ENCODE measurements at regions of chr10 and their contacts with region 1.

Region 1: DNA sequence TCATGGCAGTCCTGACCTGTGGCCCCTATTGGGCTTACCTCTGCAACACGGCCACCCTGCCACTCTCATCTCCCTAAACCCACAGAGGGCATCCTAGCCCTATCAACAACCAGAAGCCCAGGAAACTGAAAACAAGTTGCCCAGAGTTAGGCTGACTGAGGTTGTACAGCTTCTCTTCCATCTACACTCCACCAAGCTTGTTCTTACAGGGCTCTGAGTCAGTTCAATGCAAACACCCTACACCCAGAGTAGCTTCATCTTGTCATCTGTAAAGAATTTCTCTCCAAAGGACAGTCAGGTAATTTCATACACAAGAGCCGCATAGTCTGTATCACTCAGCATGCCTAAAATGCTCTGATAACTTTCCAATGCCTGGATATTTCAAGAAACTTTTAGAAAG is 175.4 kb downstream of the ARID5B start:
- DNase-seq: peak; percentile 59 to 98
- H3K4me3 ChIP-seq: peak overlapping the region; percentile 15; the same call in 1 of the 2 replicates
- H3K27ac ChIP-seq: peak overlapping the region; percentile 65
- H3K4me1 ChIP-seq: peaks cover 41% of the 10 kb centered on the region
- H3K27me3 ChIP-seq: no peaks in the 10 kb centered on the region
- CTCF ChIP-seq: no peak; the same call in 1 of the 2 replicates

Region 2: GRCh38 chr10:61628875-61629513 is 447.9 kb before region 1 on chr10:
- CTCF ChIA-PET with region 1: no interaction called
- POLR2A ChIA-PET with region 1: interaction called, 15 read pairs
- intact Hi-C with region 1: no loop called
- DNase-seq: peak; percentile 27 to 92
- H3K4me3 ChIP-seq: no peak overlapping the region
- H3K27ac ChIP-seq: 0 out of 2 replicates have a peak overlapping the region, but pooled peaks have one; percentile 35
- H3K4me1 ChIP-seq: peaks cover 42% of the 10 kb centered on the region
- H3K27me3 ChIP-seq: no peaks in the 10 kb centered on the region
- CTCF ChIP-seq: no peak

Region 3: GRCh38 chr10:61822781-61823230 is 254.1 kb before region 1 on chr10:
- CTCF ChIA-PET with region 1: no interaction called
- POLR2A ChIA-PET with region 1: no interaction called
- intact Hi-C with region 1: no loop called
- DNase-seq: no peak
- H3K4me3 ChIP-seq: no peak overlapping the region
- H3K27ac ChIP-seq: no peak overlapping the region
- H3K4me1 ChIP-seq: peaks cover 9% of the 10 kb centered on the region; the same call in 1 of the 2 replicates
- H3K27me3 ChIP-seq: no peaks in the 10 kb centered on the region
- CTCF ChIP-seq: no peak

Region 4: GRCh38 chr10:61974601-61975390 is 102.1 kb before region 1 on chr10:
- CTCF ChIA-PET with region 1: no interaction called
- POLR2A ChIA-PET with region 1: interaction called, 10 read pairs
- intact Hi-C with region 1: no loop called
- DNase-seq: no peak
- H3K4me3 ChIP-seq: no peak overlapping the region
- H3K27ac ChIP-seq: no peak overlapping the region
- H3K4me1 ChIP-seq: peaks cover 16% of the 10 kb centered on the region
- H3K27me3 ChIP-seq: no peaks in the 10 kb centered on the region
- CTCF ChIP-seq: no peak

Region 5: GRCh38 chr10:62050893-62051433 is 25.9 kb before region 1 on chr10:
- CTCF ChIA-PET with region 1: interaction called, 7 read pairs
- POLR2A ChIA-PET with region 1: interaction called, 8 read pairs
- intact Hi-C with region 1: loop called (anchors 2 kb)
- DNase-seq: peak; percentile 43 to 83
- H3K4me3 ChIP-seq: no peak overlapping the region
- H3K27ac ChIP-seq: no peak overlapping the region
- H3K4me1 ChIP-seq: peaks cover 54% of the 10 kb centered on the region
- H3K27me3 ChIP-seq: no peaks in the 10 kb centered on the region
- CTCF ChIP-seq: no peak

Region 6: DNA sequence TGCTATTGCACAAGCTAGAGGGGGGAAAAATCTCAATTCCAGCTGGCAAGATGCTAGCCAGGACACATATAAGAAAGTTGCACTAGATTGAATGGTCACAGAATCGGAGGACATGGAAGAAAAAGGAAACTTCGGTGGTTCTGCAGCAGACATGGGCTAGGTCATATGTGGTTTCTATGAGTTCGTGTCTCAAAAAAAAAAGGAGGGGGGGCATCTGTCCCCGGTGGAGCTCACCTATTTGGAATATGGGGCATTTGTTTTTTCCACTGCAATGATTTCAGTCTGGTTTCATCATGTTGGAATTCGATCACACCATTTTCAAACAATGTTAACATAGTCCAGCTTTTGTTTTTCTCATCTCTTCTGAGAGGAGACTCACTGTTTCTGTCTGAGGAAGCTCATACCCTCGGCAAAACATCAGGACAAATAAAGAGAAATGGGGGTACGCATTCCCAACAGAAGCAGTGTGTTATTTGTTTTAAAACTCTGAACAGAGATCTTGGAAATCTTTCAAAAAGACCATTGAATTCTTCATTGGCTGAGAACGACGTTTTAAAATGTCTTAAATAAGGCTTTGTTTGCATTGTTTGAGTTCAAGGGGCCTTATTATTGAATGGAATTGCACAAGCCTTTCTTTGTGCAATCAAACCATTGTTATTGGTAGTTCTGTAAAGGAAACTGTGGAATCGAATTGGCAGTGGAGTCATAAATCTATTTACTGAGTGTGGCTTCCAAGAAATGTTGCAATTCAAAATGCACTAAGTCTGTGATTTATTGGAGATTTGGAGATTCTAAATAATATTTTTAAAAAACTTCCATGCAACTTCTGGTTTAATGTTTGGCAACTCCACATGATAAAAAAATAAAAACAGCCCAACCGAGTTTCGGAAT is 18.5 kb after region 1 on chr10:
- CTCF ChIA-PET with region 1: interaction called, 3 read pairs
- POLR2A ChIA-PET with region 1: interaction called, 5 read pairs
- intact Hi-C with region 1: loop called (anchors 1 kb)
- DNase-seq: peak in 1 of 2 experiments; percentile 56
- H3K4me3 ChIP-seq: 0 out of 2 replicates have a peak overlapping the region, but pooled peaks have one; percentile 1
- H3K27ac ChIP-seq: peak overlapping the region; percentile 62
- H3K4me1 ChIP-seq: peaks cover 53% of the 10 kb centered on the region
- H3K27me3 ChIP-seq: no peaks in the 10 kb centered on the region
- CTCF ChIP-seq: no peak

Region 7: GRCh38 chr10:62109587-62110293 is 32.8 kb after region 1 on chr10:
- CTCF ChIA-PET with region 1: no interaction called
- POLR2A ChIA-PET with region 1: no interaction called
- intact Hi-C with region 1: loop called (anchors 1 kb)
- DNase-seq: no peak
- H3K4me3 ChIP-seq: no peak overlapping the region
- H3K27ac ChIP-seq: peak overlapping the region; percentile 49
- H3K4me1 ChIP-seq: peaks cover 80% of the 10 kb centered on the region
- H3K27me3 ChIP-seq: no peaks in the 10 kb centered on the region
- CTCF ChIP-seq: no peak

Region 8: GRCh38 chr10:62186999-62187677 is 110.2 kb after region 1 on chr10:
- CTCF ChIA-PET with region 1: no interaction called
- POLR2A ChIA-PET with region 1: no interaction called
- intact Hi-C with region 1: no loop called
- DNase-seq: no peak
- H3K4me3 ChIP-seq: no peak overlapping the region
- H3K27ac ChIP-seq: no peak overlapping the region
- H3K4me1 ChIP-seq: no peaks in the 10 kb centered on the region; the same call in 1 of the 2 replicates
- H3K27me3 ChIP-seq: no peaks in the 10 kb centered on the region
- CTCF ChIP-seq: no peak